ENCODE measurements at regions of chr1 and their contacts with region 1.

Region 1: GRCh38 chr1:40849801-40850592 is 12.2 kb downstream of the CITED4 start:
- DNase-seq: peak; percentile 87
- H3K4me3 Mint-ChIP-seq: no peak overlapping the region
- H3K27ac Mint-ChIP-seq: no peak overlapping the region
- H3K4me1 Mint-ChIP-seq: peaks cover 8% of the 10 kb centered on the region
- H3K27me3 Mint-ChIP-seq: no peaks in the 10 kb centered on the region

Region 2: DNA sequence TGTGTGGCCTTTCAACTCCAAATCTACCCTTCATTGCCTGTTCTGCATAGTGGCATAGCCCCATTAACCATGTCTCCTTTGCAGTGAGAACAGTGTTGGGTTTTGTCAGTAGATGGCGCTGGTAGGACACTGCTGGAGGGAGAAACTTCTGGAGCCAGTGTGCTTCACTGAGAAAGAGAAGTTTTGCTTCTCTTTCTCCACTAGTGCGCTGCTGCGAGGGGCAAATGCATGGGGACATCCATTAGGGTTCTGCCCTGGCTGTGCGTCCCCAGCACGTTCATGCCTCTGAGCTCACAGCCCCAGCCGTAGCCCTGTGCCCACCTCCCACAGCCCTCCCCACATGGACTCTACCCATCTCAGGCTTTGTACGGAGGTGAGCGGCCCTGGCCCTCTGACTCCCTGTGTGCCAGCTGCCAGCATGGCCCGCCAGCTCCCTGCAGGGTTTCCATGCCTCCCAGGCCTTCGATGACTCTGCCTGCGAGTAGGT is 237.6 kb before region 1 on chr1:
- CTCF ChIA-PET with region 1: interaction called, 5 read pairs
- intact Hi-C with region 1: loop called (anchors 1 kb)
- DNase-seq: peak; percentile 89
- H3K4me3 Mint-ChIP-seq: no peak overlapping the region
- H3K27ac Mint-ChIP-seq: no peak overlapping the region
- H3K4me1 Mint-ChIP-seq: no peaks in the 10 kb centered on the region
- H3K27me3 Mint-ChIP-seq: no peaks in the 10 kb centered on the region

Region 3: GRCh38 chr1:40625066-40625465 is 224.9 kb before region 1 on chr1:
- CTCF ChIA-PET with region 1: interaction called, 3 read pairs
- intact Hi-C with region 1: loop called (anchors 5 kb)
- DNase-seq: peak; percentile 58
- H3K4me3 Mint-ChIP-seq: no peak overlapping the region
- H3K27ac Mint-ChIP-seq: no peak overlapping the region
- H3K4me1 Mint-ChIP-seq: peaks cover 20% of the 10 kb centered on the region
- H3K27me3 Mint-ChIP-seq: no peaks in the 10 kb centered on the region

Region 4: GRCh38 chr1:40997096-40997495 is 147.1 kb after region 1 on chr1:
- CTCF ChIA-PET with region 1: no interaction called
- intact Hi-C with region 1: no loop called
- DNase-seq: no peak
- H3K4me3 Mint-ChIP-seq: no peak overlapping the region
- H3K27ac Mint-ChIP-seq: no peak overlapping the region
- H3K4me1 Mint-ChIP-seq: peaks cover 20% of the 10 kb centered on the region
- H3K27me3 Mint-ChIP-seq: no peaks in the 10 kb centered on the region